Tibial artery (tissue), 4 donors: ENCODE measurements at regions of chr15 and their contacts with region 1.

Region 1: DNA sequence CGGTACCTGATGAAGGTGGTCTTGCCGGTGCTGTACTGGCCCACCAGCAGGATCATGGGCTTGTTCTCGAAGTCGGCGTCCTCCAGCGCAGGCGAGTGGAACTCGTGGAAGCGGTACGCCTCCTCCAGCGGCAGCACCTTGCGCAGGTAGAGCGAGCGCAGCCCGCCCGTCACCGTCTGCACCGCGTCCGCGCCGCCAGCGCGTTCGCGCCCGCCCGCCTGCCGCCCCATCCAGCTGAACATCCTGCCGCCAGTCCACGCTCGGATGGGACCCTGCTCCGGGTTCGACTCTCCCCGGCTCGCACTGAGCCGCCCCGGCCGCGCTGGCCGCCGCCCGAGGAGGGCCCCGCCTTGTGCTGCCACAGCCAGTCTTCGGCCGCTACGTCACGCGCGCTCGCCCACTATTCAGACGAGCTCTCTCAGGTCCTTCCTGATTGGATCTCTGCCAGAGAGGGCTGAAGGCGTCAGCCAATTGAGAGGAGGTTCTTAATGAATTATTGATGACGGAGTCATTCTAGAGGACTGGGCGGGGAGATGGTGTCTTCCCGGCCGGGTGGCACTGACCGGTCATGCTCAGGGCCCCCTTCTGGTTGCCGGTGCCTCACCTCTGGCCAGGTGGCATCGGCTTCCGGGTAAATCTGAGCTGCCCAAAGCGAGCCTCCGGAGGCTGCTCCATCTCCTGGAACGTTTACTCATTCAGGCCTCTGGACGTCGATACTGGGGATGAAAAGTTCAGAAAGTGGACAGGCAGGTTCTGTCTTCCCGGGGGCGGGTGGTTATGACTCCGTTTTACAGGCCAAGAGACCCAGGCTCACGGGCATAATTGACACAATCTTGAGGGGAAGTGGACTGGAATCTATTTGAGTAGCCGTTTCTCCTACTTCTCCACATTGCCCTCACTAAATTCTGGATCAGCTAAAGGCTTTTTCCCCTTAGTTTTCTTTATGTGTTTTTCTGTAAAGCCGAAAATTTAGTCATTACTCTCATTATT is at the start of gene EHD4:
- DNase-seq: peak; percentile 99
- H3K4me3 ChIP-seq: peak within 1 kb of the TSS; percentile 92 to 99
- H3K27ac ChIP-seq: peak within 1 kb of the TSS; percentile 92 to 97
- H3K4me1 ChIP-seq: peaks cover 0 to 43% (median 22%) of the 10 kb centered on the region in 4 donors
- H3K27me3 ChIP-seq: no peaks in the 10 kb centered on the region
- CTCF ChIP-seq: peak; percentile 29 to 39

Region 2: DNA sequence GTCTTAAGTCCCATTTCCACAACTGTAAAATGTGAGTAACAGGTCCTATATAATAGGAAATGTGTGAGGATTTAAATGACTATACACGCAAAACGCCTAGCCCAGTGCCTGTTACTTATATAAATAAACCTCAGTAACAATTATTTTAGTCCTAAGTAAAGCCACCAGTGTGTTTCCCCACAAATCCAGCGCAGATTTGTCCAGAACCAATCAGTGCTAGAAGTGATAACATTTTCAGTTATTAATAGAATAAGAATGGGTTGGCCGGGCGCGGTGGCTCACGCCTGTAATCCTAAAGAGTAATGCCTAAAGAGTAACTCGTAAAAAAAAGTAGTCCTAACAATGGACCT is 429.1 kb before region 1 on chr15:
- intact Hi-C with region 1: no loop called
- DNase-seq: no peak
- H3K4me3 ChIP-seq: peak overlapping the region; percentile 68 to 81
- H3K27ac ChIP-seq: peak overlapping the region; percentile 78 to 83
- H3K4me1 ChIP-seq: peaks cover 0 to 11% (median 5%) of the 10 kb centered on the region in 4 donors
- H3K27me3 ChIP-seq: no peaks in the 10 kb centered on the region
- CTCF ChIP-seq: no peak

Region 3: GRCh38 chr15:41827880-41828806 is 144.4 kb before region 1 on chr15 and contains the start of gene JMJD7:
- intact Hi-C with region 1: loop called (anchors 5 kb)
- DNase-seq: peak; percentile 93 to 95
- H3K4me3 ChIP-seq: peak within 1 kb of the TSS; percentile 61 to 62
- H3K27ac ChIP-seq: peak within 1 kb of the TSS; percentile 70 to 78
- H3K4me1 ChIP-seq: peaks cover 5 to 36% (median 15%) of the 10 kb centered on the region in 4 donors
- H3K27me3 ChIP-seq: no peaks in the 10 kb centered on the region
- CTCF ChIP-seq: peak in 1 of 2 experiments; percentile 10

Region 4: GRCh38 chr15:41930221-41930866 is 42.2 kb before region 1 on chr15:
- intact Hi-C with region 1: loop called (anchors 5 kb)
- DNase-seq: peak; percentile 85 to 86
- H3K4me3 ChIP-seq: no peak overlapping the region
- H3K27ac ChIP-seq: peak overlapping the region; percentile 61 to 71
- H3K4me1 ChIP-seq: peaks cover 0 to 95% (median 76%) of the 10 kb centered on the region in 4 donors
- H3K27me3 ChIP-seq: no peaks in the 10 kb centered on the region
- CTCF ChIP-seq: peak; percentile 45 to 47